Activated CD8-positive, alpha-beta T cell treated with anti-CD3 and anti-CD28 coated beads, Interleukin-2, amount 10 ng/mL, durations not matched to agents 7 days and 5 days (primary cell): ENCODE measurements at regions of chr5 and their contacts with region 1.

Region 1: GRCh38 chr5:59188419-59189225 is 605.7 kb downstream of the RAB3C start:
- DNase-seq: peak; percentile 75
- ATAC-seq: peak; percentile 81
- H3K4me3 Mint-ChIP-seq: no peak overlapping the region
- H3K27ac Mint-ChIP-seq: no peak overlapping the region
- H3K4me1 Mint-ChIP-seq: peaks cover 5% of the 10 kb centered on the region
- H3K27me3 Mint-ChIP-seq: peaks cover 36% of the 10 kb centered on the region

Region 2: GRCh38 chr5:58891971-58892343 is 296.7 kb before region 1 on chr5:
- CTCF ChIA-PET with region 1: interaction called, 49 read pairs
- POLR2A ChIA-PET with region 1: interaction called, 4 read pairs
- DNase-seq: no peak
- ATAC-seq: no peak
- H3K4me3 Mint-ChIP-seq: no peak overlapping the region
- H3K27ac Mint-ChIP-seq: no peak overlapping the region
- H3K4me1 Mint-ChIP-seq: peaks cover 18% of the 10 kb centered on the region
- H3K27me3 Mint-ChIP-seq: peaks cover 9% of the 10 kb centered on the region

Region 3: DNA sequence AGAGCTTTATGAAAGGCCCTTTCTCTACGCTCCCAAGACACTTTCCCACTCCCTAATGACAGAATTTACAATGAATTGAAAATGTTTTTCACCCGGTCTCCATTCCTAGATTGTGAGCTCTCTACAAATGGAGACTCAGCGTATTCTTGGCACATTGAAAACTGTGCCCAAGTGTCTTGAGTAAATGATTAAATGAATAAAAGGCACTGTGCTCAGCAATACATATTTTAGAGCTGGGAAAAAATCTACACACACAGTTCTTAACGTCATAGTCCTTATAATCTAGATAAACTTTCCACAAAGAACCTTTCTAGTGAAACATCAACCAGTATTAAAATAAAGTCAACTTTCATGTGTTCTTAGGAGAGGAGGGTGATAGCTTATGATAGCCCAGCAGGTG is 28.2 kb after region 1 on chr5:
- CTCF ChIA-PET with region 1: interaction called, 11 read pairs
- POLR2A ChIA-PET with region 1: no interaction called
- DNase-seq: no peak
- ATAC-seq: no peak
- H3K4me3 Mint-ChIP-seq: no peak overlapping the region
- H3K27ac Mint-ChIP-seq: no peak overlapping the region
- H3K4me1 Mint-ChIP-seq: no peaks in the 10 kb centered on the region
- H3K27me3 Mint-ChIP-seq: peaks cover 30% of the 10 kb centered on the region

Region 4: GRCh38 chr5:59380350-59380951 is 191.8 kb after region 1 on chr5:
- CTCF ChIA-PET with region 1: interaction called, 73 read pairs
- POLR2A ChIA-PET with region 1: no interaction called
- DNase-seq: peak; percentile 50
- ATAC-seq: peak; percentile 89
- H3K4me3 Mint-ChIP-seq: no peak overlapping the region
- H3K27ac Mint-ChIP-seq: no peak overlapping the region
- H3K4me1 Mint-ChIP-seq: peaks cover 5% of the 10 kb centered on the region
- H3K27me3 Mint-ChIP-seq: peaks cover 11% of the 10 kb centered on the region

Region 5: DNA sequence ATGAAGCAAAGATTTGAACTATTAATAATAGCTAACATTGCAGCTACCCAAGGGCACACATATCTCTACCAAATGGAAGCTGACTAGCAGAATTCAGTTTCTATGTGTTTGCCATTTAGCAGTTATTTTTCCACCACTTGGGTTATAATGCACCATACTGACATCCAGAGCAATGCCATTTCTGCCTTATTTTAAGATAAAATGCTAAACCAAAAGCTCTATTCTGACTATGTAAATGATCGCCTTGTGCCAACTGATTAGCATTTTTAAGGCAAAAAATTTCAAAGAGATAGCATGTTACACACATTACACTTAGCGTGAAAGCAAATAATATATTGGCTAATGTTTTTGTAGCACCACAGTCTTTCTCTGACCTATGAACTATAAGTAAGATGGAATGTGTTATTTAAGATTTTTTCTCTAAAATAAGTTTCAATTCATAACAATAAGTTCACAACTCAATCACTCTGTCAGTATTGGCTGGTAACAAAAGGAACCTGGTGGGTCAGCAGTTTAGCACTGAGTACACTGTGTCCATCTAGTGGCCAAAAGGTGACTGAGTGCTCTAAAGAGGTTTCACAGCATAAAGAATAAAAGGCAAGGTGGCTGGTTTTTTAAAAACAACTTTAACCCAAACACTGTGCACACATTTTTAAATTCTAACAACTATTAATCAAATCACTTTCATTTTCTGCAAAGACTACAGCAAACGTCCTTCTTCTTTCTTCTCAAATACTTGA is 261.5 kb after region 1 on chr5:
- CTCF ChIA-PET with region 1: no interaction called
- POLR2A ChIA-PET with region 1: no interaction called
- DNase-seq: no peak
- ATAC-seq: no peak
- H3K4me3 Mint-ChIP-seq: no peak overlapping the region
- H3K27ac Mint-ChIP-seq: no peak overlapping the region
- H3K4me1 Mint-ChIP-seq: no peaks in the 10 kb centered on the region
- H3K27me3 Mint-ChIP-seq: no peaks in the 10 kb centered on the region